ENCODE measurements at regions of chr9 and their contacts with region 1.

Region 1: GRCh38 chr9:29475471-29475870 is 1902.2 kb upstream of the C9orf72 start:
- DNase-seq: no peak
- H3K4me3 ChIP-seq: no peak overlapping the region
- H3K27ac ChIP-seq: no peak overlapping the region
- H3K4me1 ChIP-seq: no peaks in the 10 kb centered on the region
- H3K27me3 ChIP-seq: no peaks in the 10 kb centered on the region
- CTCF ChIP-seq: no peak

Region 2: GRCh38 chr9:29422438-29422837 is 53.0 kb before region 1 on chr9:
- CTCF ChIA-PET with region 1: no interaction called
- dilution Hi-C with region 1: no loop called
- in situ Hi-C with region 1: no loop called
- intact Hi-C with region 1: no loop called
- DNase-seq: no peak
- H3K4me3 ChIP-seq: no peak overlapping the region
- H3K27ac ChIP-seq: no peak overlapping the region
- H3K4me1 ChIP-seq: no peaks in the 10 kb centered on the region
- H3K27me3 ChIP-seq: peaks cover 3% of the 10 kb centered on the region
- CTCF ChIP-seq: no peak

Region 3: DNA sequence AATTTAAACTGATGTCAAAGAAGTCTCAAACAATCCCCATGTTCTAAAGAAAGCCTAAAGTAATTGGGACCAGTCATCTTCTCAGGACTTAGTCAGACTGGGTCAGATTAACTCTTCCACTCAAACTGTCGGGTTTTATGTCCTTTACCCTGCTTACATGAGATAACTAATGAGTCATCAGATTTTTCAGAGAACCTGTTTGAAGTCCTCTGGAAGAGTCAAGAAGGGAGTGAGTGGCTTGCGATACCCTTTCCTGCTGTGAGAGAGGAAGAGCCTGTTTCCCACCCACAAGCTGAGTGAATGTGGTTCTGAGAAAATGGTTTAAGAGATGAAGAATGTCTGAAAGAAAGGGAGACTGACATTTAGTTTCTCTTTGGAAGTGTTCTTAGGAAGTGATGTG is 35.5 kb before region 1 on chr9:
- CTCF ChIA-PET with region 1: no interaction called
- dilution Hi-C with region 1: loop called (anchors 5 kb)
- in situ Hi-C with region 1: no loop called
- intact Hi-C with region 1: no loop called
- DNase-seq: no peak
- H3K4me3 ChIP-seq: no peak overlapping the region
- H3K27ac ChIP-seq: no peak overlapping the region
- H3K4me1 ChIP-seq: no peaks in the 10 kb centered on the region
- H3K27me3 ChIP-seq: no peaks in the 10 kb centered on the region
- CTCF ChIP-seq: no peak

Region 4: DNA sequence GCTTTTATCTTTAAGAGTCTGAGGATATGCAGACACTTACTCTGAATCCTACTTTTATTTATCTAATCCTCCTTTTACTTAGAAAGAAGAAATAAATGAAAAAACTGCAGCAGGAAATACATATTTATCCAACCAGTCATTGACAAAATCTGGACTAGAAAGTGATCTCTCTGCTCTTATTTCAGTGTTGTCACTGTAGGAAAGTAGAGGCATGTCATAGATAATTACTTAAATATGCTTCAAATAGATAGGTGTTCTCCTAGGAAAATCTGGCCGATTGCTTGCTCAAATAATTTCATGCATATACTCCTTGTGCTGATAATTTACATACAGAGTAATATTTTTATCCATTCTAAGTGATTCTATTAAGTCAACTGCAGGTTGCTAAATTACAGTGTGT is 99.7 kb after region 1 on chr9:
- CTCF ChIA-PET with region 1: no interaction called
- dilution Hi-C with region 1: no loop called
- in situ Hi-C with region 1: loop called in 1 of 2 experiments (anchors 25 kb)
- intact Hi-C with region 1: no loop called
- DNase-seq: no peak
- H3K4me3 ChIP-seq: no peak overlapping the region
- H3K27ac ChIP-seq: no peak overlapping the region
- H3K4me1 ChIP-seq: no peaks in the 10 kb centered on the region
- H3K27me3 ChIP-seq: no peaks in the 10 kb centered on the region
- CTCF ChIP-seq: no peak

Measured in mammary epithelial cell (primary cell).